Breast epithelium (tissue), 4 donors: ENCODE measurements at regions of chr12 and their contacts with region 1.

Region 1: GRCh38 chr12:105292705-105293104 is 37.8 kb upstream of the C12orf75 start:
- DNase-seq: no peak
- H3K4me3 ChIP-seq: no peak overlapping the region
- H3K27ac ChIP-seq: no peak overlapping the region
- H3K4me1 ChIP-seq: no peaks in the 10 kb centered on the region
- H3K27me3 ChIP-seq: no peaks in the 10 kb centered on the region
- CTCF ChIP-seq: no peak
- POLR2A ChIP-seq: no peak

Region 2: DNA sequence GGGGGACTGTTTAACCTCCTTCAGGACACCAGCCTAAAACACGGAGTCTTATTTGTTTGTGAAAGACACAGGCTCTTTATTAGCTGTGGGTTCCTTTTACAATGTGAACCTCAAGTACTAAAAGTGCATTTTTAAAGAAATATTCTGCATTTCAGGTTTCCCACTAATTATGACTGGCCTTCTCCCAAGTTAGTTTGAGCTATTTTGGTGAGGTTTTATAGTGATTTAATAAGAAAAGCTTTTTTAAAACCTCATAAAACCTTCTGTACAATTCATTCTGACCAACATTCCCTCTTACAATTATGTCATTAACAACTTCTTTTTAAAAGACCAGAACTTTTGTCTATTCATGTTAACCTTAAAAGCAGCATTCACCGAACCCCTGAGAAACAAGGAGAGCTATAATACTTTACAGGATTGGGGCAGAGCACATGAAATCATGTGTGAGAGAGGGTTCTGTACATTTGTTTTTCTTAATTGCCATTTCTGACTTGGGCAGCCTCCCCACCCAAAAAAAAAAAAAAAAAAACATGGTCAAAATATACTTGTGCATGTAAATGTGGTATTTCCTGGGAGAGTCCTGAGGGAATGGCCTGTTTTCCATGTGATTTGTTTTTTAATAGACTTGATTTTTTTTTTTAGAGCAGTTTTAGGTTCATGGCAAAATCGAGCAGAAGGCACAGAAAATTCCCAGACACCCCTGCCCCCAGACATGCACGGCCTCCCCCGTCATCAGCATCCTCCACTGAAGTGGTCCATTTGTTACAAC is 666.5 kb before region 1 on chr12:
- intact Hi-C with region 1: loop called (anchors 5 kb)
- DNase-seq: no peak
- H3K4me3 ChIP-seq: no peak overlapping the region
- H3K27ac ChIP-seq: no peak overlapping the region
- H3K4me1 ChIP-seq: no peaks in the 10 kb centered on the region
- H3K27me3 ChIP-seq: no peaks in the 10 kb centered on the region
- CTCF ChIP-seq: no peak
- POLR2A ChIP-seq: no peak

Region 3: GRCh38 chr12:106348411-106348810 is 1055.7 kb after region 1 on chr12:
- intact Hi-C with region 1: no loop called
- DNase-seq: no peak
- H3K4me3 ChIP-seq: no peak overlapping the region
- H3K27ac ChIP-seq: no peak overlapping the region
- H3K4me1 ChIP-seq: peaks cover 0 to 2% of the 10 kb centered on the region in 2 donors
- H3K27me3 ChIP-seq: no peaks in the 10 kb centered on the region
- CTCF ChIP-seq: no peak
- POLR2A ChIP-seq: no peak